ENCODE measurements at regions of chr7 and their contacts with region 1.

Region 1: DNA sequence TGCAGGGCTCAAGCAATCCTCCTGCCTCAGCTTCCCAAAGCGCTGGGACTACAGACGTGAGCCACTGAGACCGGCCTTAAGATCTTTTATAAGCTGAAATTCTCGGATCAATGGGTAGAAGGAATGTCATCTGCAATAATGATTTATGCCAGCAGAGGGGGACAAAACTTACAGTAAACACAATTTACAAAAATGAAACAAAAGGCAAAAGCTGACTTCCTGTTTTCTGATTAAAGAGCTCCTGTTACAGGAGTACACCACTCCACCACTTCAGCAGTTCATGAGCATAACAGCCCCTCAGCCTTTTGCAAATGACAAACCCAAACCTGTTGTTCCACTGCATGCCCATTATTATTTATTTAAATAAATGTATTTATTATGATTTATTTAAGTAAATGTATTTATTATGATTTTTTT is 88.5 kb upstream of the ATP6V0A4 start:
- DNase-seq: peak; percentile 88
- ATAC-seq: peak; percentile 2; the same call in 1 of the 2 replicates
- H3K4me3 ChIP-seq: no peak overlapping the region
- H3K27ac ChIP-seq: peak overlapping the region; percentile 43
- H3K4me1 ChIP-seq: peaks cover 33% of the 10 kb centered on the region
- H3K27me3 ChIP-seq: no peaks in the 10 kb centered on the region
- CTCF ChIP-seq: peak; percentile 69

Region 2: GRCh38 chr7:138835087-138835486 is 51.4 kb before region 1 on chr7:
- CTCF ChIA-PET with region 1: no interaction called
- POLR2A ChIA-PET with region 1: no interaction called
- intact Hi-C with region 1: no loop called
- DNase-seq: no peak
- ATAC-seq: no peak
- H3K4me3 ChIP-seq: no peak overlapping the region
- H3K27ac ChIP-seq: no peak overlapping the region
- H3K4me1 ChIP-seq: no peaks in the 10 kb centered on the region
- H3K27me3 ChIP-seq: no peaks in the 10 kb centered on the region
- CTCF ChIP-seq: no peak; the same call in 1 of the 2 replicates

Region 3: DNA sequence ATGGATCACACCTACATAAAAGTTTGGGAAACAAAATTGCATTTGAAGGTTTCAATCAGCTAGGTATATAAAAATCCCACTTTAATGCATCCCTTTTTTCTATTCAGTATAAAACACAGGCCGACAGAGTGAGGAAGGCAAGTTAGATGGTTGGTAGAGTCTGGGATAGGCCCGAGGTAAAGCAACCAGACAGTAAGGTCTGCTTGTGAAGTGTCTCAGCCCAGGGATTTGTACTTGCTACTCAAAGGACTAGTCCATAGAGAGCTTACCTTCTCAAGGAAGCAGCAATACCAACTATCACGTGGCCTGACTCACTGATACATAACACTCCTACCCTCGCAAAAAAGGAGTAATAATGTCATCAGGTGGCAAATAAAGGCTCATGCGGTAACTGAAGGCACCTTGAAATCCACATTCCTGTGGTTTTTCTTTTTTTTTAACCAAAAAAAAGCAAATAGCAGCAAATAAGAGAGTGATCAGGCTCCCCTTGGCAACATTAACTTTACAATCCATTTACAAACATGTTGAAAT is 32.3 kb before region 1 on chr7:
- CTCF ChIA-PET with region 1: no interaction called
- POLR2A ChIA-PET with region 1: no interaction called
- intact Hi-C with region 1: no loop called
- DNase-seq: peak; percentile 72
- ATAC-seq: peak; percentile 95
- H3K4me3 ChIP-seq: no peak overlapping the region
- H3K27ac ChIP-seq: peak overlapping the region; percentile 44
- H3K4me1 ChIP-seq: peaks cover 18% of the 10 kb centered on the region
- H3K27me3 ChIP-seq: no peaks in the 10 kb centered on the region
- CTCF ChIP-seq: no peak

Region 4: DNA sequence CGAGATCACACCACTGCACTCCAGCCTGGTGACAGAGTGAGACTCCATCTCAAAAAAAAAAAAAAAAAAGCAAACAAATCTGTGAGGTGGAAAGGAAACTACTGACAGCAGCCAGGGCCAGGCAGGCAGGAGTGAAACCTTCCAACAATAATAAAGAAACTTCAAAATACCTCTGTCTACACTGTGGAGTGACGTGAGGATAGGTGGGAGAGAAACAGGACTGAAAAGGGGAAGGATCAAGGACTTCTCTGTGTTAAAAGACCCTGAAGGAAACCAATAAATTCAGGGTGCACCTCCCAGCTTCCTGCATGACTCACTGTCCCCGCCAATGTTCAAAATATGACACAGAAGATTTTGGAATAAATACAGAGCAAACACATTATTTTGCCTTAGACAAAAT is 11.7 kb after region 1 on chr7:
- CTCF ChIA-PET with region 1: interaction called, 16 read pairs
- POLR2A ChIA-PET with region 1: interaction called, 9 read pairs
- intact Hi-C with region 1: loop called (anchors 1 kb)
- DNase-seq: peak; percentile 84
- ATAC-seq: peak; percentile 65
- H3K4me3 ChIP-seq: no peak overlapping the region
- H3K27ac ChIP-seq: peak overlapping the region; percentile 99
- H3K4me1 ChIP-seq: peaks cover 74% of the 10 kb centered on the region
- H3K27me3 ChIP-seq: no peaks in the 10 kb centered on the region
- CTCF ChIP-seq: no peak

Region 5: GRCh38 chr7:138919216-138919615 is 32.7 kb after region 1 on chr7:
- CTCF ChIA-PET with region 1: interaction called, 11 read pairs
- POLR2A ChIA-PET with region 1: interaction called, 10 read pairs
- intact Hi-C with region 1: loop called (anchors 1 kb)
- DNase-seq: peak; percentile 83
- ATAC-seq: peak; percentile 93
- H3K4me3 ChIP-seq: no peak overlapping the region
- H3K27ac ChIP-seq: peak overlapping the region; percentile 92
- H3K4me1 ChIP-seq: peaks cover 19% of the 10 kb centered on the region
- H3K27me3 ChIP-seq: no peaks in the 10 kb centered on the region
- CTCF ChIP-seq: no peak

Region 6: DNA sequence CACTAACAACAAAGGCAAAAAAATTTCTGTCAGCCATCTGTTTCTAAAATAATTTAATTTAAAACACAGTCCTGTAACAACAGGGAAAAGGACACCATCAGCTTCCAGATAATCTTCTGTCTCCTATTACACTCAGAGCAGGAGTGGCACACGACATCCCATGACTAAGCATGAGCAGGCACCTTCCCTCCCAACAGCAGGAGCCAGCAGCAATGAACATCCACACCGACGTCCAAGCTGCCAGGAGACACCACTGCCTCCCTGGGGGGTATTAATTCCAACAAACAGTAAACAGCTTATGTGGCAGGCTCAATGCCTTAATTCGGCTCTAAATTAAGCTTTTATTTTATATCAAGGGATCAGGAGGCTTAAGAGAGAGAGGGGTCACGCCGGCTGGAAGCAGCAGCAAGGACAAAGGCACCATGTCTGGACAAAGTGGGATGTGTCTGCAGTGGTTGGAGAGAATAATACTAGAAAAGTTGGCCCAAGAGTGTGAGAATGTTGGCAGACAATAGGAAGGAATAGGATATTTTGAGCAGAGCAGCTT is 49.0 kb after region 1 on chr7:
- CTCF ChIA-PET with region 1: interaction called, 13 read pairs
- POLR2A ChIA-PET with region 1: interaction called, 8 read pairs
- intact Hi-C with region 1: loop called (anchors 1 kb)
- DNase-seq: peak; percentile 92
- ATAC-seq: peak; percentile 93
- H3K4me3 ChIP-seq: peak overlapping the region; percentile 49; the same call in 1 of the 2 replicates
- H3K27ac ChIP-seq: peak overlapping the region; percentile 91
- H3K4me1 ChIP-seq: peaks cover 32% of the 10 kb centered on the region
- H3K27me3 ChIP-seq: no peaks in the 10 kb centered on the region
- CTCF ChIP-seq: no peak

Region 7: GRCh38 chr7:138981332-138982203 is 95.1 kb after region 1 on chr7 and contains the start of gene KIAA1549:
- CTCF ChIA-PET with region 1: interaction called, 8 read pairs
- POLR2A ChIA-PET with region 1: interaction called, 4 read pairs
- intact Hi-C with region 1: loop called (anchors 1 kb)
- DNase-seq: peak; percentile 77
- ATAC-seq: peak; percentile 79
- H3K4me3 ChIP-seq: peak within 1 kb of the TSS; percentile 90
- H3K27ac ChIP-seq: peak within 1 kb of the TSS; percentile 40
- H3K4me1 ChIP-seq: peaks cover 22% of the 10 kb centered on the region
- H3K27me3 ChIP-seq: no peaks in the 10 kb centered on the region
- CTCF ChIP-seq: no peak
- total RNA-seq, gene KIAA1549: 7.5 and 8.2 TPM in 2 replicates

Region 8: DNA sequence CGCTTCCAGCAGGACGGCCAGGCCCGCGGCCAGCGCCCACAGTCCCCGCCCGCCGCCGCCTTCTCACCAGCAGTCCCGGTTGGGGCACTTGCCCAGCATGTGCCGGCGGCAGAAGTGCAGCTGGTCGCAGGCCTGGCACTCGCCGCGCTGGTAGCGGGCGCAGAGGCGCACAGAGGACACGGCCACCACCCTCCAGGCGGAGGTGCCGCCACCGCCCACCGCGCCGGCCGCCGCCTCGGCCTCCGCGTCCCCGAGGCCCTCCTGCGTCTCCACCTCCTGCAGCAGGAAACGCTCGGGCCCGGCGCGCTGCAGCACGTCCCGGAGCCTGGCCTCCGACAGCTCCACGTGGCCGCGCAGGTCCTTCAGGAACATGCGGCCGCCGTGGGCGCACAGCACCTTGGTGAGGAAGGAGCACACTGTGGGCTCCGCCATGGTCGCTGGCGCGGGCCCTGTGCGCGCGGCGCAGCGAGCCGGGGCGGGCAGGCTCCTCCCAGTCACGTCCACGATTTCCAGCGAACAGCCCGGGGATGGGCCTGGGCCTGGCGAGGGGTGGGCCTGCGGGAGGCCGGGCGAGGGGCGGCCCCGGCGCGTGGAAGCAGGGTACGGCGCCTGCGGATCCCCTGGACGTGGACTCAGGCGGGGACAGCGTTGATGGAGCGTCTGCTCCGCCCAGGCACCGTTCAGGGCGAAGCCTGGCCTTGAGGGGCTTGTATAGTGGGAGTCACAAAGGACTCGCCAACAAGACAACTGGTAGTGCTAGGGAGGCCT is 149.3 kb after region 1 on chr7 and contains the start of gene ZC3HAV1L:
- CTCF ChIA-PET with region 1: interaction called, 3 read pairs
- POLR2A ChIA-PET with region 1: no interaction called
- intact Hi-C with region 1: loop called (anchors 5 kb)
- DNase-seq: peak; percentile 67
- ATAC-seq: peak; percentile 86
- H3K4me3 ChIP-seq: peak within 1 kb of the TSS; percentile 94
- H3K27ac ChIP-seq: peak within 1 kb of the TSS; percentile 78
- H3K4me1 ChIP-seq: peaks cover 25% of the 10 kb centered on the region
- H3K27me3 ChIP-seq: no peaks in the 10 kb centered on the region
- CTCF ChIP-seq: no peak
- total RNA-seq, gene ZC3HAV1L: 8.2 and 8.7 TPM in 2 replicates

Region 9: DNA sequence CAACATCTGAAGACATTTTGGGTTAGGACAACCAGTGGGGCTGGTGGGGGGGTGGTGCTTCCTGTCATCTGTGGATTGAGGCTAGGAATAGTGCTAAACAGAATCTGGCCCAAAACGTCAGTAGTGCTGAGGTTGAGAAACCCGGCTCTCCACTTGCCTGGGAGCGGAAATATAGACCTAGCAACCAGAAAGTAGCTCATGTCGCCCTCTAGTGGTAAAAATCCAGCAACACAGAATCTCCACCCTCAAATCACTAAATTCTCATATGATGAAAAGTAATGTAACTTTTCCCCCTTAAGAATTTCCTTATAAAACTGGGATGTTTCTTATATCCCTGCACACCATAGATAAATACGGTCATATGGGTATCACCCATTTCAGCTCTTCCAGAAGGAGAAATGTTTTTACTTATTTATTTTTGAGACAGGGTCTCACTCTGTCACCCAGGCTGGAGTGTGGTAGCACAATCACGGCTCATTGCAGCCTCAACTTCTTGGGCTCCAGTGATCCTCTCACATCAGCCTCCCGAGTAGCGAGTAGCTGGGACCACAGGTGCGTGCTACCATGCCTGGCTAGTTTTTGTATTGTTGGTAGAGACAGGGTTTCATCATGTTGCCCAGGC is 188.6 kb after region 1 on chr7:
- CTCF ChIA-PET with region 1: interaction called, 5 read pairs
- POLR2A ChIA-PET with region 1: no interaction called
- intact Hi-C with region 1: loop called (anchors 2 kb)
- DNase-seq: peak; percentile 83
- ATAC-seq: peak; percentile 86
- H3K4me3 ChIP-seq: no peak overlapping the region
- H3K27ac ChIP-seq: no peak overlapping the region
- H3K4me1 ChIP-seq: peaks cover 3% of the 10 kb centered on the region; the same call in 1 of the 2 replicates
- H3K27me3 ChIP-seq: no peaks in the 10 kb centered on the region
- CTCF ChIP-seq: peak; percentile 84

Measured in PC-3 (cell line).